Astrocyte of the cerebellum (primary cell): ENCODE measurements at regions of chr15 and their contacts with region 1.

Region 1: DNA sequence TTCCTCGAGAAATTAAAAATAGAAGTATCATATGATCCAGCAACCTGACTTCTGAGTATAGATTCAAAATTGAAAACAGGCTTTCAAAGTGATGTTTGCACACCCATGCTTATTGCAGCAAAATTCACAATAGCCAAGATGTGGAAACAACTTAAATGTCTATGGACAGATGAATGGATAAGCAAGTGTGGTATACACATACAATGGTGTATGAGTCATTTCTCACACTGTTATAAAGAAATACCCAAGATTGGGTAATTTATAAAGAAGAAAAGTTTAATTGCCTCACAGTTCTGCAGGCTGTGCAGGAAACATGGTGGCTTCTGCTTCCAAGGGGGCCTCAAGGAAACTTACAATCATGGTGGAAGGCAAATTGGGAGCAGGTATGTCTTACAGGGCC is 100.8 kb downstream of the KLF13 start:
- DNase-seq: no peak
- H3K4me3 ChIP-seq: no peak overlapping the region
- CTCF ChIP-seq: no peak

Region 2: DNA sequence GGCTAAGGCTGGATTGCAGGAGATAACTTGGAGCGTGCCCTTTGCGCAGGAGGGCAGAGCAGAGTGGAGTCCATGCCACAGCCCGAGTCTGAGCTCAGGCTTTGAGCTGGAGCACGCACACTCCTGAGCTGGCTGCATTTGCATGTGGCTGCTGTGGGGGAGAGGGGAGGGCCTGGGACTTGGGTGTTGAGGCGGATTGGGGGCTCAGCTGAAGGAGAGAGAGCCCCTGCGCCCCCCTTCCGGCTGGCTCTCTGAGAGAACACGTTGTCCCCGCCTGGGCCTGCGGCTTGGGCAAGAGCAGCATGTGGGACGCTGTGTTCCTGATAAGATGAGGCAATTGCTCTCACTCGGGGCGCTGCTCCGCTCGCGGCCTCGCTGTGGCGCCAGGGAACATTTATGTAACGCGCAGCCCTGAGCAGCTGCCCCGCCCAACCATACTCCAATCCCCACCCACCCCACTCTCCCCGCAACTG is 61.7 kb before region 1 on chr15:
- in situ Hi-C with region 1: loop called (anchors 5 kb)
- DNase-seq: peak; percentile 31
- H3K4me3 ChIP-seq: no peak overlapping the region
- CTCF ChIP-seq: peak; percentile 28